Activated naive CD4-positive, alpha-beta T cell treated with anti-CD3 and anti-CD28 coated beads for 36 hours (primary cell): ENCODE measurements at regions of chr4 and their contacts with region 1.

Region 1: DNA sequence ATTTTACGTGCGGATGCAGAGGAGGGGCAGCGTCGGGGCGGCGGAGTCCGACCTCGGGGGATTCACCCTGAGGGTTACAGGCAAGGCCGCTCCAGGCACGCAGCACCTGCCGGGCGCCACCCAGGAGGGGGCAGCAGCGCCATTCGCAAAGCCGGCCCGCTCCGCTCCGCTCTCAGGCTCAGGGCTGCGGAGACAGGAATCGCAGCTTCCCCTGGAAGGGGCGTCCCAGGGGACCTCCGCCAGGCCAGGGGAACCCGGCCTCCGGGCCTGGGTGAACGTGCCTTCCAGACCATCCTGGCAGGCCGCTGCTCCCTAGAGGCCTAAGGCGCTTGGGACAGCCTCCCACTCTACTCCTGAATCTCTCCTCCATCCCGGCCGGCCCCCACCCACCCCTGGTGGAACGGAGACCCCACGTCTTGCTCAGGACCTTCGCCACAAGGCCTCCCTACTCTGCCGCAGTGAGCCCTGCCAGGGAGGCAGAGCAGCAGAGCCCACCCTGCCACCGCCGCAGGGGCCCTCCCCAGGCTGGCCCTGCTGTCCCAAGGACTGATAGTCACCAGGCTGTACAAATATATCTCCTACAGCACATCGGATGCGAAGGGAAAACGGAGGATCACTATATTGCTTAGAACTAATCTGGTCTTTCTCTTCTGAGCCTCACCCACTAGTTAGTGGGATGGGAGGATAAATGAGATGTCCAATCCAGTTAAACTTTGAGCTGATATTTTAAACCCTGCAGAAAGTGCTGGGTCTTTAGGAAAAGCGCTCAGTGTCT is 115.0 kb downstream of the SMIM20 start:
- DNase-seq: peak; percentile 80
- H3K4me3 Mint-ChIP-seq: no peak overlapping the region
- H3K27ac Mint-ChIP-seq: no peak overlapping the region
- H3K4me1 Mint-ChIP-seq: peaks cover 12% of the 10 kb centered on the region
- H3K27me3 Mint-ChIP-seq: peaks cover 16% of the 10 kb centered on the region

Region 2: GRCh38 chr4:26055855-26056254 is 26.9 kb after region 1 on chr4:
- CTCF ChIA-PET with region 1: interaction called, 4 read pairs
- intact Hi-C with region 1: loop called (anchors 2 kb)
- DNase-seq: no peak
- H3K4me3 Mint-ChIP-seq: no peak overlapping the region
- H3K27ac Mint-ChIP-seq: no peak overlapping the region
- H3K4me1 Mint-ChIP-seq: peaks cover 22% of the 10 kb centered on the region
- H3K27me3 Mint-ChIP-seq: peaks cover 5% of the 10 kb centered on the region

Region 3: GRCh38 chr4:26325191-26325590 is 296.2 kb after region 1 on chr4:
- CTCF ChIA-PET with region 1: interaction called, 52 read pairs
- intact Hi-C with region 1: loop called (anchors 1 kb)
- DNase-seq: peak; percentile 46
- H3K4me3 Mint-ChIP-seq: peak overlapping the region; percentile 31
- H3K27ac Mint-ChIP-seq: no peak overlapping the region
- H3K4me1 Mint-ChIP-seq: peaks cover 39% of the 10 kb centered on the region
- H3K27me3 Mint-ChIP-seq: no peaks in the 10 kb centered on the region

Region 4: GRCh38 chr4:26459054-26459755 is 430.2 kb after region 1 on chr4:
- CTCF ChIA-PET with region 1: no interaction called
- intact Hi-C with region 1: loop called (anchors 2 kb)
- DNase-seq: peak; percentile 8
- H3K4me3 Mint-ChIP-seq: peak overlapping the region; percentile 65
- H3K27ac Mint-ChIP-seq: no peak overlapping the region
- H3K4me1 Mint-ChIP-seq: peaks cover 19% of the 10 kb centered on the region
- H3K27me3 Mint-ChIP-seq: no peaks in the 10 kb centered on the region

Region 5: DNA sequence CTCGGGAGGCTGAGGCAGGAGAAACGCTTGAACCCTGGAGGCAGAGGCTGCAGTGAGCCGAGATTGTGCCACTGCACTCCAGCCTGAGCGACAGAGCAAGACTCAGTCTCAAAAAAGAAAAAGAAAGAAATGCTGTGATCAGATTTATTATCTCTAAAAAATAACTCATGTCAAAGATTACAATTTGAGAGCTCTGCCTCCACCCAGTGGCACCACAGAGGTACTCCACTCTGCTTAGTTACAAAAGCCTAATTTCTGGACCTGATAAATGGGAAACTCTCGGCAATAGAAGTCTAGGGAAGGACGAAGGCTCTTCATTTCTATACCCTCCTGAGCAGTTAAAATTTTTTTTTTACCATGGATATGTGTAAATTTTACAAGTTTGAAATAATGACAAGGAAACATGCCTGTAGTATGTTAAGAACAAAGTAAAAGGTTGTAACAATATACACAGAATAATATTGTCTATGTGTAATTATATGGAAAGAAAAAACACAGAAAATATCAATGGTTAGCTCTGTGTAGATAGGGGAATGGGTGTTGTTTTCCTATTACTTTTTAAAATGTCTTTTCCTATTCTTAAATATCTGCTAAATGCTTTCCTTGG is 981.5 kb after region 1 on chr4:
- CTCF ChIA-PET with region 1: interaction called, 4 read pairs
- intact Hi-C with region 1: loop called (anchors 2 kb)
- DNase-seq: peak; percentile 77
- H3K4me3 Mint-ChIP-seq: no peak overlapping the region
- H3K27ac Mint-ChIP-seq: peak overlapping the region; percentile 53
- H3K4me1 Mint-ChIP-seq: peaks cover 25% of the 10 kb centered on the region
- H3K27me3 Mint-ChIP-seq: no peaks in the 10 kb centered on the region